B cell (primary cell): ENCODE measurements at regions of chr16 and their contacts with region 1.

Region 1: GRCh38 chr16:67415872-67416793 is at the start of gene ZDHHC1:
- DNase-seq: peak; percentile 73
- ATAC-seq: peak; percentile 97
- H3K4me3 ChIP-seq: peak within 1 kb of the TSS; percentile 25 to 69 (median 64)
- H3K4me3 Mint-ChIP-seq: peak within 1 kb of the TSS; percentile 89
- H3K27ac ChIP-seq: peak within 1 kb of the TSS in 1 of 2 donors; percentile 70
- H3K27ac Mint-ChIP-seq: no peak within 1 kb of the TSS
- H3K4me1 ChIP-seq: peaks cover 8 to 11% of the 10 kb centered on the region in 2 donors
- H3K4me1 Mint-ChIP-seq: peaks cover 12% of the 10 kb centered on the region
- H3K27me3 ChIP-seq: peaks cover 0 to 13% (median 5%) of the 10 kb centered on the region in 4 experiments
- H3K27me3 Mint-ChIP-seq: peaks cover 15% of the 10 kb centered on the region
- CTCF ChIP-seq: peak; percentile 67
- total RNA-seq, gene ZDHHC1: 2.4 and 2.8 TPM in 2 replicates

Region 2: DNA sequence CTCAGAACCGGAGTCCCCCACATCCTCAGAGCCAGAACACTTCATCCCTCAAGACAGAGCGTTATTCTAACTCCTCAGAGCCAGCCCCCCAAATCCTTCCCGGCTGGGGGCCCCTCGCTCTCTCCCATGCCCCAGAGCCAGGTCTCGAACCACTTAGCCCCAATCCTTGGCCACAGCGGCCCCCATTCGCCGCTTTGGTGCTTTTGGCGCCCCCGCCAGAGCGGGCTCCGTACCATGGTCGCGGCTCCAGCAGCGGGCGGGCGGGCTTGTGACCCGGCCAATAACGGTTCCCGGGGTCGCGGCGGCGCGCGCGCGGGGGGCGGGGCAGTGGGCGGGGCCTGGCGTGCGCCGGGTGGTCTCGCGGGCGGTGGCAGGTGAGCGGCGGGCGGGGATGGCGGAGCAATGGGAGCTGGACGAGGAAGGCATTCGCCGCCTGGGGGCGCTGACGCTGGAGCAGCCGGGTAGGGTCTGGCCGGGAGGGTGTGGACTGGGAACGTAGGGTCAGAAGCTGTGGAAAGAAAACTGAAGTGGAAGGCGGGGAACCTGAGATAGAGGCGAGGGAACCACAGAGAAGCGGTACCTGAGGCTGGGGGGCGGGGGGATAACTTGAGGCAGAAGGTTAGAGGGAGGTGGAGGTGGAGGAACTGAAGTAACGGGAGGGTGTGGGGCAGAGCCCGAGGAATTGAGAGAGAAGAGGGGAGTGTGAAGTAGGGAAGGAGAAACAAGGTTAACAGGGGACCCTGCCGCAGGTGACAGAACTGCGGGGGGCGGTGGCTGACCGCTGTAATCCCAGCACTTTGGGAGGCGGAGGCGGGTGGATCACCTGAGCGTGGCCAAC is 89.4 kb before region 1 on chr16 and contains the starts of genes KCTD19 and LRRC36:
- CTCF ChIA-PET with region 1: no interaction called
- POLR2A ChIA-PET with region 1: no interaction called
- intact Hi-C with region 1: no loop called
- DNase-seq: peak; percentile 58
- ATAC-seq: peak; percentile 58
- H3K4me3 ChIP-seq: peak within 1 kb of the TSS in 4 of 5 experiments; percentile 38 to 55 (median 46)
- H3K4me3 Mint-ChIP-seq: peak within 1 kb of the TSS; percentile 82
- H3K27ac ChIP-seq: peak within 1 kb of the TSS in 1 of 2 donors; percentile 46
- H3K27ac Mint-ChIP-seq: peak within 1 kb of the TSS; percentile 47
- H3K4me1 ChIP-seq: peaks cover 29 to 36% of the 10 kb centered on the region in 2 donors
- H3K4me1 Mint-ChIP-seq: peaks cover 28% of the 10 kb centered on the region
- H3K27me3 ChIP-seq: peaks cover 0 to 4% (median 0%) of the 10 kb centered on the region in 4 experiments
- H3K27me3 Mint-ChIP-seq: peaks cover 9% of the 10 kb centered on the region
- CTCF ChIP-seq: peak; percentile 37
- total RNA-seq, gene KCTD19: not detected in 2 replicates
- total RNA-seq, gene LRRC36: not detected in 2 replicates

Region 3: DNA sequence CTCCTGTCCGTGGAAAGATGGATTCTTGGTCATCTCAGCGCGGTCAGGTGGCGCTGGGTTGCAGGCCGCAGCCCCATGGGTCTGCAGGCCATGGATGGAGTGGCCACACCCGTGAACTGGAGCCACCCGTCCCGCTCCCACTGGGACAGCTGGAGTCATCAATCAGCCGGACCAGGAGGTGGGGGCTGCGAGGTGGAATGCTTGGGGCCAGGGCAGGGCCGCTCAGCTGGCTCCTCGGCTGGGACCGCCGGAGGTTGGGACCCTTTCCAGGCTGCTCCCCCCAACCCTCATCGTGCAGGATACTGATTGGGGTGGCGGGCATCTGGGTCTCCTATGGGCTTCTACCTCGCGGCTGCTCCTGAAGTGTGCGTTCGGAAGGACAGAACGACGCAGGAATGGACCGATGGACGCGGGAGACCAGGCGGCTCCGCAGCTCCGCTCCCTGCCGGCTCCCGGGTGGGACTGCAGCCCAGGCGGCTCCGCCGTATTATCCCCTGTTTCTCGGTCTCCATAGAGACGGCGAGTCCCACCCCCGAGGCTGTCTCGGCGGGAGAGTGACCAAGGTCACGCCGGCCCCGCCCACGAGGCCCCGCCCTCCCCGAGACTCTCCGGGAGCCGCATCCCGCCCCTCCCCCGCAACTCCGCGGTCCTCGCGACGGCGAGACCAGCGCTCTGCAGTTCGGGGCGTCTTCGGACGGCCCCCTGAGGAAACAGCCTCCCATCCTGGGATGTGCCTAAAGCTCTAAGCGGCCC is 22.9 kb before region 1 on chr16 and contains the start of gene TPPP3:
- CTCF ChIA-PET with region 1: no interaction called
- POLR2A ChIA-PET with region 1: no interaction called
- intact Hi-C with region 1: loop called (anchors 2 kb)
- DNase-seq: no peak
- ATAC-seq: no peak
- H3K4me3 ChIP-seq: peak within 1 kb of the TSS in 3 of 5 experiments; percentile 21 to 39 (median 31)
- H3K4me3 Mint-ChIP-seq: peak within 1 kb of the TSS; percentile 85
- H3K27ac ChIP-seq: no peak within 1 kb of the TSS
- H3K27ac Mint-ChIP-seq: peak within 1 kb of the TSS; percentile 10
- H3K4me1 ChIP-seq: peaks cover 35 to 36% of the 10 kb centered on the region in 2 donors
- H3K4me1 Mint-ChIP-seq: peaks cover 26% of the 10 kb centered on the region
- H3K27me3 ChIP-seq: peaks cover 0 to 42% (median 31%) of the 10 kb centered on the region in 4 experiments
- H3K27me3 Mint-ChIP-seq: peaks cover 36% of the 10 kb centered on the region
- CTCF ChIP-seq: peak; percentile 38
- total RNA-seq, gene TPPP3: not detected in 2 replicates